Activated T-helper 1 cell treated with anti-CD3 and anti-CD28 coated beads, Interleukin-12 subunit alpha, Interleukin-12 subunit beta, Interleukin-2, Interleukin-4 antibody, amounts not matched to agents 30 ng/mL and 10 ng/mL and 1 ng/mL, durations not matched to agents 14 hours and 24 hours and 36 hours (primary cell): ENCODE measurements at regions of chr9 and their contacts with region 1.

Region 1: GRCh38 chr9:134163353-134164196 is 789 bp downstream of the RNU6ATAC start:
- DNase-seq: peak; percentile 61
- H3K4me3 Mint-ChIP-seq: no peak overlapping the region
- H3K27ac Mint-ChIP-seq: no peak overlapping the region
- H3K4me1 Mint-ChIP-seq: peaks cover 10% of the 10 kb centered on the region
- H3K27me3 Mint-ChIP-seq: no peaks in the 10 kb centered on the region

Region 2: GRCh38 chr9:133347985-133348717 is 815.4 kb before region 1 on chr9 and contains the starts of genes MED22 and RPL7A:
- intact Hi-C with region 1: loop called (anchors 2 kb)
- DNase-seq: peak; percentile 90
- H3K4me3 Mint-ChIP-seq: peak within 1 kb of the TSS; percentile 93
- H3K27ac Mint-ChIP-seq: peak within 1 kb of the TSS; percentile 99
- H3K4me1 Mint-ChIP-seq: peaks cover 36% of the 10 kb centered on the region
- H3K27me3 Mint-ChIP-seq: peaks cover 2% of the 10 kb centered on the region
- total RNA-seq, gene MED22: 37.9 and 40.5 TPM in 2 replicates
- total RNA-seq, gene RPL7A: 2,401 and 2,463 TPM in 2 replicates

Region 3: DNA sequence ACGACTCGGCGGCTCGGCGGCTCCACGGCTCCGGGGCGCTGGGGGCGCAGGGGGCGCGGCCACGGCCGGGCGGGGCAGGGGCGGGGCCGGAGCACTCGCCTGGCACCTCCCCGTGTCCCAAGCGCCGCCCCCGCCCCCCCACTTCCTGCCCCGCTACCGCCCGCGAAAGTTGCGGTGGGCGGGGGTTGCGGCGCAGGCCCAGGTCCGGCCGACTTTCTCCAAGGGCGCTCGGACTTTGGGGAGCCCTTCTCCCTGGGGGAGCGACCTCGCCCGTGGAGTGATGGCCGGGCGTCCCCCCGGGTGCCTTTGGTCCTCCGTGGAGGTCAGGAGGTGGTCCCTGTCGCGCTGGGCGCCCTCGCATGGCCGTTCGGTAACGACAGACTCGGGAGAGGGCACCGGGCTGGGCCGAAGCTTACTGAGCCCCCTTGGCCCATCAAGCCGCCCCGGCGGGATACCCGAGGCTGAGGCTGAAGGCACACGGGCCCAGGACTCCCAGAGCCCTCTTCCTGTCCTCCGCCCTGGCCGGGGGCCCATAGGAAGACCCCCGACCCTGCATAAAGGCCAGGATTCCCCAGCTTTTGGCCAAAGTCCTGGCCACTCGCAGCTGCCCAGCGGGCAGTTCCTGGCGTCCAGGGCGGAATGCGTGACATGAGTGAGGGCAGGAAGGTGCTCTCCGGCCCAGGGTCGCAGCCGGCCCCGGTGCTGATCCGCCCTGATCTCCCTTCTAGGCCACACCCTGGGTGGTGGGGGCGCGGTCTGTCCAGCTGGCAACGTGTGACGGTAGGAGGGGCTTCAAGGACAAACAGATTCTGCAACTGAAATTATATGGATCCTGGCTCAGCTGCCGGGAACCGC is 170.6 kb before region 1 on chr9:
- intact Hi-C with region 1: loop called (anchors 1 kb)
- DNase-seq: peak; percentile 49
- H3K4me3 Mint-ChIP-seq: peak overlapping the region; percentile 72
- H3K27ac Mint-ChIP-seq: no peak overlapping the region
- H3K4me1 Mint-ChIP-seq: no peaks in the 10 kb centered on the region
- H3K27me3 Mint-ChIP-seq: peaks cover 19% of the 10 kb centered on the region

Region 4: DNA sequence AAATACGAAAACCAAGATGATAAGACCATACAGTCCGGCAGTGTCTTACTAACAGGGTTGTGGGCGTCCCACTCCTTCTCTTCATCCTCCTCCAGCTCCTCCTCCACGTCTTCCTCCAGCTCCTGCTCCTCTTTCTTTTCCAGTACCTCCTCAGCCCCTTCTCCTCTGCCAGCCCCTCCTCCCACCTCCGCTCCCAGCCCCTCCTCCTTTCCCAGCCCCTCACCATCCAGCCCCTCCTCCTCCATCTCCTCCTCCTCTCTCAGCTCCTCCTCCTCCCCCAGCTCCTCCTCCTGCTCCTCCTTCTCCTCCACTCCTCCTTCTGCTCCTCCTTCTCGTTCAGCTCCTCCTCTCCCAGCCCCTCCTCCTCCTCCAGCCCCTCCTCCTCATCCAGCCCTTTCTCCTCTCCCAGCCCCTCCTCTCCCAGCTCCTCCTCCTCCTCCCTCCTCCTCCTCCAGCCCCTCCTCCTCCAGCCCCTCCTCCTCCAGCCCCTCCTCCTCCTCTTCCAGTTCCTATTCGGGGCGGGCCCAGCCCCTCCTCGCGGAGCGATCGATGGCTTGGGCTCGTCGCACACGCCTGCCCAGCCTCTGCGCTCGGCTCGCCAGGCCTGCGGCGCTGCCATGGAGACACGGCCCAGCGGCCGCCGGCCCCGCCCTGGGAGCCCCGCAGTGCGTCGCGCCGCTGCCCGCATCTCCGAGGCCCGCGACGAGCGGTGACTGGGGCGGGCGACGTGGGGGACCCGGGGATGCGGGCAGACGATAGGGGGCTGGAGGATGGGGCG is 138.6 kb before region 1 on chr9 and contains the start of gene BRD3OS:
- intact Hi-C with region 1: loop called (anchors 1 kb)
- DNase-seq: peak; percentile 92
- H3K4me3 Mint-ChIP-seq: peak within 1 kb of the TSS; percentile 79
- H3K27ac Mint-ChIP-seq: no peak within 1 kb of the TSS
- H3K4me1 Mint-ChIP-seq: no peaks in the 10 kb centered on the region
- H3K27me3 Mint-ChIP-seq: no peaks in the 10 kb centered on the region
- total RNA-seq, gene BRD3OS: 12.3 and 14.5 TPM in 2 replicates

Region 5: GRCh38 chr9:134135343-134136118 is 28.0 kb before region 1 on chr9 and contains the start of gene WDR5:
- intact Hi-C with region 1: loop called (anchors 1 kb)
- DNase-seq: peak; percentile 84
- H3K4me3 Mint-ChIP-seq: peak within 1 kb of the TSS; percentile 96
- H3K27ac Mint-ChIP-seq: peak within 1 kb of the TSS; percentile 93
- H3K4me1 Mint-ChIP-seq: peaks cover 29% of the 10 kb centered on the region
- H3K27me3 Mint-ChIP-seq: no peaks in the 10 kb centered on the region
- total RNA-seq, gene WDR5: 65.0 and 71.3 TPM in 2 replicates

Region 6: DNA sequence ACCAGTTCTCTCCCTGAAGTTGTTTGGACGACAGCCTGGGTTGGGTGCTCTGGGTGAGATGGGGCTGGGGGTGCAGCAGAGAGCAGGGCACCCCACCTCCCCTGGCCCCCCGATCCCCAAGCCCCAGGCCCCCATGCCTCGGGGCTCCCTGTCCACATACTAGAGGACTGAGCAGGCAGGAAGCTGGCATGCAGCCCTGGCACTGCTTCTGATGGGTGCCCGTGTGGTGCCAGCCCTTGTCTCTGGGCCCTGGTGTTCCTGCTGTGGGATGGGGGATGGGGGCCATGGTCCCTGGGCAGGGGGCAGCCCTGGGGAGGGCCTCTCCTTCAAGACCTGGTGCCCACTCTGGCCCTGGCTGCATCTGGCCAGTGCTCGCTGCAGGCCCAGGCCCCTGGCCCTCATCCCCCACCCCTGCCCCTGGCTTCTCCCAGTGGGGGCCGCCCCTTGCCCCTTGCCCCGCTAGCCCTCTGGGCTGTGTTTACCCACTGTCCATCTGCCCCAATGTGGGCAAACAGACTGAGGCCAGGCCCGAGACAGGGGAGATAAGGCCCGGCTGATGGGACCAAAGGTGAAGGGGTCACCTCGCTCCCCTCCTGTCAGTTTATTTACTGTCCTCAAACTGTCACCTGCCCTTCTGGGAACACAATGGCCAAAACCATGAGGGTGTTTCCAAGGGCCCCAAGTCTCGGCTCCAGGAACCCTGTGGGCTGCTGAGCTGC is 95.4 kb after region 1 on chr9:
- intact Hi-C with region 1: no loop called
- DNase-seq: no peak
- H3K4me3 Mint-ChIP-seq: no peak overlapping the region
- H3K27ac Mint-ChIP-seq: no peak overlapping the region
- H3K4me1 Mint-ChIP-seq: no peaks in the 10 kb centered on the region
- H3K27me3 Mint-ChIP-seq: peaks cover 4% of the 10 kb centered on the region

Region 7: DNA sequence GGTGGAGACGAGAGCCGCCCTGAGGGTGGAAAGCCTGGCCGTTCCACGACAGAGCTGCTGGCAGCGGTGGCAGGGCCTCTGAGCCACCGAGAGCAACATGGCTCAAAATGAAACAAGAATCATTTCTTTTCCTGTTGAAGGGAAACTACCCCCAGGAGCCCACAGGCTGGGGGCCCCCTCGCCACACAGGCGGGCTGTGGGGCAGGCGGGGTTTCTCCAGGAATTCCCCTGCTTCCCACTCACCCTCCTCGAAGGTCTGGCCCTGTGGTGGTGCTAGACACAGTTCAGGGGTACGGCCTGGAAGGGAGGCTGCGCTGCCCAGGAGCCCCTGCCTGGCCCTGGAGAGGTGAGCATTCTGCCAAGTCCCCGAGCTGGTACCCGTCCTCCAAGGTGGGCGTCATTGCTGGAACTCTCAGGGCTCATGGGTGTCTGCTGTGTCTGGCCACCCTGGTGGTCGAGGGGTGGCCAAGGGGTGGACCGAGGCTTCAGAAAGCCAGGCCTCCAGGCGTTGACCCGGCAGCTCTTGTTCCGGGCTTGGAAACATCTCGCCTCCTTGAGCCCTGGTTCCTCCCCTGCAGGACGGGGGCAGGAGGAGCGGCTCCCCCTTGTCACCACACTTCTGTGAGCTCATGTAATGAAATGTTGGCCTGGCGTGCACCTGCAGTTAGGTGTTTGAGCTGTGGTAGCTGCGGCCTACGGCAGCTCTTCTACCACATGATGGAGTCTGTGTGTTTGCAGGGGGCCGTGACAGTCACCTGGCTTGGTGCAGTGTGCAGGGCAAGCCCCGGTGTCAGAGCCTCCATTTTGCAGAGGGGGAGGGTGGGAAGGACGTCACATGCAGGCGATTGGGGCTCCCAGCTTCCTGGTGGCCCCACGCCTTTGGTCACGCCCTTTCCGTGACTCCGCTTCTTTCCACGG is 228.0 kb after region 1 on chr9:
- intact Hi-C with region 1: loop called (anchors 1 kb)
- DNase-seq: peak; percentile 59
- H3K4me3 Mint-ChIP-seq: peak overlapping the region; percentile 51
- H3K27ac Mint-ChIP-seq: peak overlapping the region; percentile 82
- H3K4me1 Mint-ChIP-seq: peaks cover 38% of the 10 kb centered on the region
- H3K27me3 Mint-ChIP-seq: peaks cover 33% of the 10 kb centered on the region

Region 8: DNA sequence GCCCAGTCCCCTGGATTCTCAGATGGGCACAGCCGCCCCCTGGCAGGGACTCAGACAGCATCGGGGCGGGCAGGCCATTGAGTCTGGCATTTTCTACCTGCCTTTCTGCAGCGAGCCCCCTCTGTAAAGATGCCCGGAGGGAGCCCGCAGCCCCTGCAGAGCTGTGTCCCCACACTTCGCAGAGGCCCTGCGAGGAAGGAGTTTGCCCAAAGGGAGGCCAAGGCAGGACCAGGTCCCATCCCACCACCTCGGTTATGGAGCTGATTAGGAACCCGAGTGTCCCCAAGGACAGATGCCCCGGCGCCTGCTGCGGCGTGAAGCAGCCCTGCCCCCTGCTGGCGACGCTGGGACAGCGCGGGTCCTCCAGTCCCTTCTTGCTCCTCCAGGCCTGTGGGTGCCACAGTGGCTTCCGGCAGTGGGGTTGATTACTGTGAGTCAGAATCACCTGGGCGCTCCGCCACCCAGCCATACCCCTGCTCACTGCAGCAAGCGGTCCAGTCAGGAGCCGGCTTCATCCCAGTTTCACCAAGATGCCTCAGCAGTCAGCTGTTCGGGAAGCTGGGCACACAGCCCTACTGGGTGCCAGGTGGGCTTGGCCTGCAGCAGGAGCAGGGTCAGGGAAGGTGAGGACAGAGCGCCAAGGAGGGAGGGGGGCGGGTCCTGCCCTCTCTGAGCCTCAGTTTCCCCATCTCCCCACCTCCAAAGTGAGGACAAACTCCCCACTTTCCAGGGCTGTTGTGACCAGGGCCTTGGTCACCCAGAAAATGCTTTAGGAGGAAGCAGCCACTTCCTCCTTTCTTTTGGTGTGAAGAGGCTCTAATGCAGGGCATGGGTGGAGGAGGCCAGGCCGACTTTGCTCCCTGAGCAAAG is 279.8 kb after region 1 on chr9:
- intact Hi-C with region 1: loop called (anchors 1 kb)
- DNase-seq: peak; percentile 79
- H3K4me3 Mint-ChIP-seq: no peak overlapping the region
- H3K27ac Mint-ChIP-seq: no peak overlapping the region
- H3K4me1 Mint-ChIP-seq: no peaks in the 10 kb centered on the region
- H3K27me3 Mint-ChIP-seq: peaks cover 9% of the 10 kb centered on the region